ENCODE measurements at regions of chr20 and their contacts with region 1.

Region 1: GRCh38 chr20:2523919-2524708 is 12.3 kb upstream of the TMC2 start:
- DNase-seq: peak; percentile 95
- ATAC-seq: peak; percentile 76
- H3K4me3 Mint-ChIP-seq: peak overlapping the region; percentile 81
- H3K27ac Mint-ChIP-seq: peak overlapping the region; percentile 88
- H3K4me1 Mint-ChIP-seq: peaks cover 15% of the 10 kb centered on the region
- H3K27me3 Mint-ChIP-seq: peaks cover 2% of the 10 kb centered on the region

Region 2: GRCh38 chr20:2451939-2452732 is 72.0 kb before region 1 on chr20:
- CTCF ChIA-PET with region 1: interaction called, 13 read pairs
- POLR2A ChIA-PET with region 1: interaction called, 3 read pairs
- intact Hi-C with region 1: no loop called
- DNase-seq: peak; percentile 85
- ATAC-seq: peak; percentile 58
- H3K4me3 Mint-ChIP-seq: no peak overlapping the region
- H3K27ac Mint-ChIP-seq: no peak overlapping the region
- H3K4me1 Mint-ChIP-seq: peaks cover 45% of the 10 kb centered on the region
- H3K27me3 Mint-ChIP-seq: no peaks in the 10 kb centered on the region

Region 3: GRCh38 chr20:2476742-2477615 is 47.1 kb before region 1 on chr20:
- CTCF ChIA-PET with region 1: interaction called, 17 read pairs
- POLR2A ChIA-PET with region 1: no interaction called
- intact Hi-C with region 1: no loop called
- DNase-seq: no peak
- ATAC-seq: no peak
- H3K4me3 Mint-ChIP-seq: no peak overlapping the region
- H3K27ac Mint-ChIP-seq: no peak overlapping the region
- H3K4me1 Mint-ChIP-seq: peaks cover 5% of the 10 kb centered on the region
- H3K27me3 Mint-ChIP-seq: no peaks in the 10 kb centered on the region

Region 4: GRCh38 chr20:2538931-2539720 is 15.0 kb after region 1 on chr20:
- CTCF ChIA-PET with region 1: interaction called, 12 read pairs
- POLR2A ChIA-PET with region 1: interaction called, 9 read pairs
- intact Hi-C with region 1: no loop called
- DNase-seq: no peak
- ATAC-seq: no peak
- H3K4me3 Mint-ChIP-seq: no peak overlapping the region
- H3K27ac Mint-ChIP-seq: no peak overlapping the region
- H3K4me1 Mint-ChIP-seq: no peaks in the 10 kb centered on the region
- H3K27me3 Mint-ChIP-seq: peaks cover 24% of the 10 kb centered on the region

Region 5: GRCh38 chr20:2643708-2644107 is 119.6 kb after region 1 on chr20:
- CTCF ChIA-PET with region 1: interaction called, 34 read pairs
- POLR2A ChIA-PET with region 1: no interaction called
- intact Hi-C with region 1: loop called in 1 of 2 experiments (anchors 2 kb)
- DNase-seq: no peak
- ATAC-seq: peak; percentile 61
- H3K4me3 Mint-ChIP-seq: no peak overlapping the region
- H3K27ac Mint-ChIP-seq: no peak overlapping the region
- H3K4me1 Mint-ChIP-seq: peaks cover 8% of the 10 kb centered on the region
- H3K27me3 Mint-ChIP-seq: no peaks in the 10 kb centered on the region

Region 6: GRCh38 chr20:2752567-2753460 is 228.7 kb after region 1 on chr20:
- CTCF ChIA-PET with region 1: interaction called, 5 read pairs
- POLR2A ChIA-PET with region 1: no interaction called
- intact Hi-C with region 1: loop called in 1 of 2 experiments (anchors 2 kb)
- DNase-seq: peak; percentile 67
- ATAC-seq: peak; percentile 28
- H3K4me3 Mint-ChIP-seq: peak overlapping the region; percentile 69
- H3K27ac Mint-ChIP-seq: peak overlapping the region; percentile 34
- H3K4me1 Mint-ChIP-seq: peaks cover 32% of the 10 kb centered on the region
- H3K27me3 Mint-ChIP-seq: peaks cover 34% of the 10 kb centered on the region

Measured in activated CD4-positive, alpha-beta T cell treated with anti-CD3 and anti-CD28 coated beads for 36 hours (primary cell).